Gastrocnemius medialis (tissue), 4 donors: ENCODE measurements at regions of chr10 and their contacts with region 1.

Region 1: GRCh38 chr10:123132576-123133477 is 2.9 kb upstream of the HMX3 start:
- DNase-seq: peak; percentile 39 to 62
- ATAC-seq: peak; percentile 84
- H3K4me3 ChIP-seq: peak overlapping the region in 3 of 4 donors; percentile 15 to 31 (median 29)
- H3K27ac ChIP-seq: no peak overlapping the region
- H3K4me1 ChIP-seq: peaks cover 24 to 26% of the 10 kb centered on the region in 2 donors
- H3K27me3 ChIP-seq: peaks cover 92 to 97% (median 97%) of the 10 kb centered on the region in 3 donors
- CTCF ChIP-seq: peak; percentile 62 to 86 (median 80)
- POLR2A ChIP-seq: no peak

Region 2: GRCh38 chr10:123552760-123553554 is 420.1 kb after region 1 on chr10:
- in situ Hi-C with region 1: loop called in 3 of 4 experiments (anchors 5 to 10 kb)
- intact Hi-C with region 1: no loop called
- DNase-seq: no peak
- ATAC-seq: no peak
- H3K4me3 ChIP-seq: no peak overlapping the region
- H3K27ac ChIP-seq: no peak overlapping the region
- H3K4me1 ChIP-seq: no peaks in the 10 kb centered on the region
- H3K27me3 ChIP-seq: peaks cover 0 to 5% (median 0%) of the 10 kb centered on the region in 3 donors
- CTCF ChIP-seq: no peak
- POLR2A ChIP-seq: no peak